SK-N-SH (cell line): ENCODE measurements at regions of chr9 and their contacts with region 1.

Region 1: GRCh38 chr9:78035383-78035993 is 3.9 kb upstream of the GNAQ start:
- DNase-seq: peak; percentile 65
- H3K4me3 ChIP-seq: peak overlapping the region in 1 of 2 experiments; percentile 14; a peak in 1 of 4 replicates
- H3K27ac ChIP-seq: peak overlapping the region in 1 of 2 experiments; percentile 36; a peak in 3 of 4 replicates
- H3K4me1 ChIP-seq: peaks cover 0 to 9% of the 10 kb centered on the region in 2 experiments; a peak in 3 of 4 replicates
- H3K27me3 ChIP-seq: no peaks in the 10 kb centered on the region
- CTCF ChIP-seq: peak; percentile 85
- EP300 ChIP-seq: no peak
- RAD21 ChIP-seq: peak; percentile 92

Region 2: DNA sequence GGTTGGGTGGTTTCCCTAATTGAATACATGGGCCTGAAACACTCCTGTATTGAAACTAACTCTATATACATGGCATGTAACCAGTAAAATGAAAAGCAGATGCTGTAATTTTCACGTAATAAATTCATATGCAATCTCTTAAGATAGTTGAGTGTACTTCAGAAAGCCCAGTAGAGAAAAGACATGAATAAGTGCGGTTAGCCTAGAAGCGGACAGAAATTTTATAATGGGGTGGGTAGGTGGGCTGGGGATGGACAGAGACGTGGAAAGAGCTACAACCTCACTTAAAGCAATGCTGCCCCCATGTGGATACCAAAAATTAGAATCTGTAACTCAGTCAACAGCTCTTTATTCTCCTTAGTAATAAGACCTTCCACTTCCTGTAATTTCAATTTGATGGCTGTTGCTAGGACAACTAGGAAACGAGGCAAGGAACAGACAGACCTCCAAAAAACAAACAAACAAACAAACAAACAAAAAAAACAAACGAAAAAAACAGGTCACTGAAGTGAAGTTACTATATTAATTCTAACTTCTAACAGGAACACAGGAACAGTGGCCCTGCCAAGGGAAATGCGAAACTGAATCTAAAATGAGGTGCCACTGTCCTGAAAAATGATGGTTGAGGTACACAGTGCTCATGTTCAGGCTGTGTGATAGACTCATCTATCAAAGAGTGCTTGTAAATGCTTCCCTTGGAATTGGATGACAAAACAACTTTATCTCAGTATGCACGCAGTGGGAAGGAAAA is 284.0 kb before region 1 on chr9:
- CTCF ChIA-PET with region 1: interaction called, 22 read pairs
- POLR2A ChIA-PET with region 1: no interaction called
- DNase-seq: peak; percentile 72
- H3K4me3 ChIP-seq: peak overlapping the region; percentile 1 to 27; a peak in 1 of 4 replicates
- H3K27ac ChIP-seq: peak overlapping the region; percentile 78 to 100
- H3K4me1 ChIP-seq: peaks cover 46 to 51% of the 10 kb centered on the region in 2 experiments; a peak in 3 of 4 replicates
- H3K27me3 ChIP-seq: no peaks in the 10 kb centered on the region
- CTCF ChIP-seq: peak; percentile 78
- EP300 ChIP-seq: peak; percentile 1 to 72; a peak in 2 of 4 replicates
- RAD21 ChIP-seq: peak; percentile 94

Region 3: DNA sequence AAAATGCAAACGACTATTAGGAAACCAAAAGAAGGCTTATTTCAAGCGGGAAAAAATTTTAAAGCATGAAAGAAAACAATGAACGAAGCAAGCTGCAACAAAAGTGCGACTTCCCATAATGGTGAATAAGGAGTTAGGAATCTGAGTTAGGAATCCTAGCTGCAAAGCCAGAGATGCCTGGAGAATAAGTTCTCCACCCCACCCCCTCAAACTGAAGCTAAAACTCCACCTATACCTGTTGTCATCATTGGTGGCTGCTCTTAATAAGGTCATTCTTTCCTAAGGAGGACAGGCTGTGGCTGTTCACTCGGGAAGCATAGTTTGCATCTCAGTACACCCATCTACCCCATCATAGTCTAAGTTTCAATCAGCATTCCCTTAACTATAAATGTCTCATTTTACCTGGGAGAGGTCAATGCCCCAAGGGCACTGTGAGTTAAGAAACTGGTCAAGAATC is 151.1 kb before region 1 on chr9:
- CTCF ChIA-PET with region 1: interaction called, 11 read pairs
- POLR2A ChIA-PET with region 1: no interaction called
- DNase-seq: no peak
- H3K4me3 ChIP-seq: no peak overlapping the region
- H3K27ac ChIP-seq: peak overlapping the region; percentile 14 to 56; a peak in 3 of 4 replicates
- H3K4me1 ChIP-seq: peaks cover 14 to 29% of the 10 kb centered on the region in 2 experiments; a peak in 3 of 4 replicates
- H3K27me3 ChIP-seq: no peaks in the 10 kb centered on the region
- CTCF ChIP-seq: no peak
- EP300 ChIP-seq: no peak
- RAD21 ChIP-seq: no peak

Region 4: DNA sequence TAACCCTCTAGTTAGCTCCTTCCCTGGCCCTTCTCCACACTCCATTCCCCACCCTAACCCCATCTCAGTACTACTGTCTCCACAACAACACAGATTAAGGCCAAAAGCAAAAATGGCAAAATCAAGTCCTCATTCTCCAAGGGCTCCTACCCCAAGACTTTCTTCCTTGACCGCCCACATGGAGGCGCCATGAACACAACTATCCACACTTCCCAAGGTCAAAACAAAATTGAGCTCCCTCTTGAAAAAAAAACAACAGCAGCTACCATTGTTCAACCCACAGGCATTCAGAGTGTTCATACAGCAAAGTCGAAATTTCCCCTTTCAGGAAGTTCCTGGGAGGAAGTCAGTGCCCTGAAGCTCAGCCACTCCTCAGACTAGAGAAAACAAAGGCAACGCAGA is 58.3 kb before region 1 on chr9:
- CTCF ChIA-PET with region 1: interaction called, 41 read pairs
- POLR2A ChIA-PET with region 1: no interaction called
- DNase-seq: peak; percentile 25
- H3K4me3 ChIP-seq: peak overlapping the region in 1 of 2 experiments; percentile 20; a peak in 1 of 4 replicates
- H3K27ac ChIP-seq: peak overlapping the region; percentile 5 to 42; a peak in 2 of 4 replicates
- H3K4me1 ChIP-seq: peaks cover 10 to 41% of the 10 kb centered on the region in 2 experiments; a peak in 3 of 4 replicates
- H3K27me3 ChIP-seq: no peaks in the 10 kb centered on the region
- CTCF ChIP-seq: peak; percentile 76
- EP300 ChIP-seq: no peak
- RAD21 ChIP-seq: peak; percentile 77

Region 5: GRCh38 chr9:78053627-78054026 is 18.1 kb after region 1 on chr9:
- CTCF ChIA-PET with region 1: interaction called, 24 read pairs
- POLR2A ChIA-PET with region 1: no interaction called
- DNase-seq: no peak
- H3K4me3 ChIP-seq: no peak overlapping the region
- H3K27ac ChIP-seq: no peak overlapping the region
- H3K4me1 ChIP-seq: no peaks in the 10 kb centered on the region
- H3K27me3 ChIP-seq: no peaks in the 10 kb centered on the region
- CTCF ChIP-seq: no peak
- EP300 ChIP-seq: no peak
- RAD21 ChIP-seq: no peak